ENCODE measurements at regions of chr2 and their contacts with region 1.

Region 1: DNA sequence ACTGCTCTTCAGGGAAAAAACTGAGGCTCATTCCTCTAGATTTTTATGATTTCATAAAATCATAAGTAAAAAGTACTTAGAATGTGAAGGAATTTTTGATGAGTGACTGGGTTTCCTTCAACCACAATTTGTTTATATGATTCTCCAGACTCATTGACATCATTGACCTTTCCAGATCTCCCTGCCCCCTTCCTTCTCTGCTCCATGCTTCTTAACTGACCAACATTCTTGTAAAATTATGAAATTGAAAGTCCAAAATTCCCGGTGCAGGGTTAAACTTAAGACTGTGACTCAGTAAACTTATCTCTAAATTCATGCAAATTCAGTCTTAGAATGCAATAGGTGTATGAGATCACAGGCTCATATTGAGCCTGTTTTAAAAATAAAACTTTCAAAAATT is 648.9 kb downstream of the TDRD15 start:
- DNase-seq: peak; percentile 98
- ATAC-seq: peak; percentile 89
- H3K4me3 ChIP-seq: no peak overlapping the region
- H3K27ac ChIP-seq: no peak overlapping the region
- H3K4me1 ChIP-seq: peaks cover 17% of the 10 kb centered on the region
- H3K27me3 ChIP-seq: no peaks in the 10 kb centered on the region
- CTCF ChIP-seq: no peak
- POLR2A ChIP-seq: no peak
- RAD21 ChIP-seq: no peak

Region 2: DNA sequence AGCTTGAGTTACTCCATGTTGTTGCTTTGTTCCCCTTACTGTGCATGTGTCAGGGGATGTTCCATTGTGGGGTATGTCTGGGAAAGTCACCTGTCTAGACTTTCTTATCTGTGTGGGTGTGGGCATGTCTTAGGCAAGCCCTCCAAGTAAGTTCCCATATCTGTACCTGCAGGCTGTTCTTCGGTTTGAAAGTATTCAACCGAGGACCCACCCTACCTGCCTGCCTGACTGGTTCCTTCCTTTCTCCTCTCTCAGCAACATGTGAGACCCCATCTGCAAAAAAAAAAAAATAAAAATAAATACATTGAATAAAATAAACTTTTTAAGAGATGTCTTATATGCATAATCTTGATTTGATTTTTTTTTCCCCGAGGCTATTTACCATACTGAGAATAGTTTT is 26.1 kb before region 1 on chr2:
- CTCF ChIA-PET with region 1: no interaction called
- POLR2A ChIA-PET with region 1: no interaction called
- dilution Hi-C with region 1: no loop called
- in situ Hi-C with region 1: no loop called
- intact Hi-C with region 1: no loop called
- DNase-seq: no peak
- ATAC-seq: no peak
- H3K4me3 ChIP-seq: no peak overlapping the region
- H3K27ac ChIP-seq: no peak overlapping the region
- H3K4me1 ChIP-seq: no peaks in the 10 kb centered on the region
- H3K27me3 ChIP-seq: no peaks in the 10 kb centered on the region
- CTCF ChIP-seq: no peak
- POLR2A ChIP-seq: no peak
- RAD21 ChIP-seq: no peak

Region 3: GRCh38 chr2:21819454-21819853 is 46.8 kb after region 1 on chr2:
- CTCF ChIA-PET with region 1: no interaction called
- POLR2A ChIA-PET with region 1: no interaction called
- dilution Hi-C with region 1: no loop called
- in situ Hi-C with region 1: no loop called
- intact Hi-C with region 1: loop called (anchors 1 kb)
- DNase-seq: peak; percentile 83
- ATAC-seq: peak; percentile 57
- H3K4me3 ChIP-seq: no peak overlapping the region
- H3K27ac ChIP-seq: peak overlapping the region; percentile 36; the same call in 1 of the 2 replicates
- H3K4me1 ChIP-seq: peaks cover 14% of the 10 kb centered on the region
- H3K27me3 ChIP-seq: no peaks in the 10 kb centered on the region
- CTCF ChIP-seq: no peak
- POLR2A ChIP-seq: no peak
- RAD21 ChIP-seq: no peak

Region 4: DNA sequence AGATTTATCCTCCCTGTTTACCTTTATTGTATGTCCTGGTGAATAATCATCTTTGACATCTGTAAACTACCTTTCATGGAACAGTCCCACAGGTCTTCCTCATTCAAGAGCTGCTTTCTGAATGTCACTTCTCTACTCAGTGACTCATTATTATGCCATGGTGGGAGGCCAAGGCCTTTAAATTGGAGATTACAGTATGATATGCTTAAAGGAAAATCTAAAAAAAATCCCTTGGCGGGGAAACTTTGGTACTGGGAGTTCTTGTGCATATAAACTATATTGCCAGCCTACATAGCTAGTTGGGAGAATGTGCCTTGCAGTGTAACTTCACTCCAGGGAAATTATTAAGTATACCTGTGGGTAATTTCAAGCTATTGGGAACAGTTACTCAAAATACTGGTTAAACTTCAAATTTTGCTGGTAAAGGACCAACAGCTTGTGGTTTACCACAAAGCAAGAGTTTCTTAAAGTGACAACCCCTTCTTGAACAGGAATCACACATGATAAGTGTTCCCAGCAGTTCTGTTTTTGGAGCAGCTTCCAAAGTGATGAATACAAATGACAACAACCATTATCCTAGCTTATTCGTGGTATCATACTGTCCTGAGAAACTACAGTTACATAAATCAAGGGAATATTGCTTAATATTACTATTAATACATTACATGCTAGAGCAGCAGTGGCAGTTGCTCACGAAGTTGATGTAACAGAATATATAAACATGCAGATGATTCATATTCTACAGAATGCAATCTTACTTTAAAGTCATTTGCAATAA is 64.3 kb after region 1 on chr2:
- CTCF ChIA-PET with region 1: no interaction called
- POLR2A ChIA-PET with region 1: no interaction called
- dilution Hi-C with region 1: no loop called
- in situ Hi-C with region 1: no loop called
- intact Hi-C with region 1: loop called (anchors 1 kb)
- DNase-seq: peak; percentile 95
- ATAC-seq: peak; percentile 88
- H3K4me3 ChIP-seq: no peak overlapping the region
- H3K27ac ChIP-seq: peak overlapping the region; percentile 39; the same call in 1 of the 2 replicates
- H3K4me1 ChIP-seq: peaks cover 5% of the 10 kb centered on the region
- H3K27me3 ChIP-seq: no peaks in the 10 kb centered on the region
- CTCF ChIP-seq: no peak
- POLR2A ChIP-seq: no peak
- RAD21 ChIP-seq: no peak

Measured in IMR-90 (cell line).